A673 (cell line): ENCODE measurements at regions of chr5 and their contacts with region 1.

Region 1: GRCh38 chr5:87780831-87781760 is 368.4 kb upstream of the CCNH start:
- DNase-seq: peak; percentile 90
- H3K4me3 ChIP-seq: no peak overlapping the region
- H3K27ac ChIP-seq: no peak overlapping the region
- H3K4me1 ChIP-seq: no peaks in the 10 kb centered on the region
- H3K27me3 ChIP-seq: no peaks in the 10 kb centered on the region
- CTCF ChIP-seq: peak; percentile 90

Region 2: GRCh38 chr5:87421307-87421706 is 359.8 kb before region 1 on chr5:
- CTCF ChIA-PET with region 1: no interaction called
- POLR2A ChIA-PET with region 1: no interaction called
- intact Hi-C with region 1: loop called (anchors 2 kb)
- DNase-seq: no peak
- H3K4me3 ChIP-seq: no peak overlapping the region
- H3K27ac ChIP-seq: no peak overlapping the region
- H3K4me1 ChIP-seq: no peaks in the 10 kb centered on the region
- H3K27me3 ChIP-seq: no peaks in the 10 kb centered on the region
- CTCF ChIP-seq: no peak

Region 3: DNA sequence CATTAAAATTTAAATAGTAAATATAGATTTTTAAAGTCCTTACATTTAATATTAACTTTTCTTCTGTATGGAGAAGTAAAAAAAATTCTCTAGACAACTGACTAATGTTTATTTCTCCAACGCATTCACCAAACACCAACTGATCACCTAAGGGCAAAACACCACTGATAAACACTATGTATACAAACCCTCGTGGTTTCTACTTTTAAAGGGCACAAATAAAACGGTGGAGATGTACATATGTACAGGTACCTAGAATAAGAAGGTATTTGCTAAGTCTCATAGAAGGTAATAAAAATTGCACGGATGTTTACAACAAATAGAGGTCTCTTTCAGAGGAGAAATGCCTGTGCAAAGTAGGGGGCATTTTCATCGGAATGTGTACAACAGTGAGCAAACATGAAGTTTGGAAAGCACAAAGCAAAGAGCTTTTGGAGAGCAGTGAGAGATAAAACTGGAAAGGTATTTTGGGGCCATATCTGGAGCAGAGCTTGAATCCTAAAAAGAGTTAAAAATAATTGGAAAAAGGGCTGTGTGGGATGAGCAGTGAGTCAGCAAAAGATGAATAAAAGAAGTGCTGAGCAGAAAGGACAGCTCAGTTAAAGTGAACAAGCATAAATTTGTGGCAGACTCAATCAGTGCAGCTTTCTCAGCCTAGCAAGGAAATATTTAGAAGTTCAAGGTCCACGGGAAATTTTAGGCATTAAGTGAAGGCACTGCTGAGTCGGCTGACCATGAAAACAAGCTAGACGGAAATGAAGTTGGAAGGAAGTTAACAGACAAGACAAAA is 327.6 kb after region 1 on chr5:
- CTCF ChIA-PET with region 1: no interaction called
- POLR2A ChIA-PET with region 1: no interaction called
- intact Hi-C with region 1: no loop called
- DNase-seq: peak; percentile 0
- H3K4me3 ChIP-seq: no peak overlapping the region
- H3K27ac ChIP-seq: no peak overlapping the region
- H3K4me1 ChIP-seq: no peaks in the 10 kb centered on the region
- H3K27me3 ChIP-seq: no peaks in the 10 kb centered on the region
- CTCF ChIP-seq: no peak

Region 4: GRCh38 chr5:88140856-88141752 is 360.0 kb after region 1 on chr5:
- CTCF ChIA-PET with region 1: no interaction called
- POLR2A ChIA-PET with region 1: no interaction called
- intact Hi-C with region 1: loop called (anchors 1 kb)
- DNase-seq: peak; percentile 99
- H3K4me3 ChIP-seq: peak overlapping the region; percentile 56
- H3K27ac ChIP-seq: peak overlapping the region; percentile 49
- H3K4me1 ChIP-seq: no peaks in the 10 kb centered on the region
- H3K27me3 ChIP-seq: no peaks in the 10 kb centered on the region
- CTCF ChIP-seq: peak; percentile 67

Region 5: DNA sequence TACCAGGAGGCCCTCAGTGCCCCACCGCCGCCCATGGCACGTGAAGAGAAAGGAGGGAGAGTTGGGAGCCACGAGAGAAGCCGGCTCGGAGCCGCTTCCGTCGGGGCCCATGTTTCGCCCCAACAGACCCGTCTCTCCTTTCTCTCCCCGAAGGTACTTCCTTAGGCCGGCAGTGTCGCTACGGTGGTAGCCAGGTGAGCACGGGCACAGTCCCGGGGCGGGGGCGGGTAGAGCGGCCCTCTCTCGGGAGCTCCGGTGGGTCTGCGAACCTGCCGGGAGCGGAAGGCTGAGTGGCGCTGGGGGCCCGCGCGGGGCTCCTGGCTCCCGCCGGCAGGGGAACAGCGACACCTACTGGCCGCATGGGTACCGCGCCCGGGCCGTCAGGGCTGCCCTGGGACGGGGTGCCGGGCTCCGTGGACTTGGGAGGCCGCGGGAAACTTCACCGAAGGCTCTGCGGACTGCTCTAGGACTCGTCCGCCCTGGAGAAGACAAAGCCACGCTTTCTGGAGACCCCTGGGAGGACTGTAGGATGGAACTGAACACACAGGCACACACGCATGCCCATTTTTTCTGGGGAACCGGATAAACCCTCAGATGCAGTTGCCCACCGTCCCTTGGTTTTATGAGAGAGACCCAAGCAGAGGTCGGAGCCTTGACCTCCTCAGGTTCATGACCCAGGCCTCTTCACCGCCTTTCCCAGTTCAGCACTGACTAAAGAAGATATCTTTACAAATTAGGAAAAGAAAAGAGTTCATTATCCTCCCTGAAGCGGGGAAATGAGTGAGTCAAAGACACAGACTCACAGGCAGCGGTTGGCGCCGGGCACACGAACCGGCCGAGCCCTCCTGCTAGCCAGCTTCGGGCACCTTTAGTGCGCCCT is 899.4 kb after region 1 on chr5:
- CTCF ChIA-PET with region 1: interaction called, 4 read pairs
- POLR2A ChIA-PET with region 1: no interaction called
- intact Hi-C with region 1: loop called (anchors 2 kb)
- DNase-seq: peak; percentile 83
- H3K4me3 ChIP-seq: peak overlapping the region; percentile 41
- H3K27ac ChIP-seq: no peak overlapping the region
- H3K4me1 ChIP-seq: peaks cover 23% of the 10 kb centered on the region
- H3K27me3 ChIP-seq: peaks cover 37% of the 10 kb centered on the region
- CTCF ChIP-seq: peak; percentile 96

Region 6: DNA sequence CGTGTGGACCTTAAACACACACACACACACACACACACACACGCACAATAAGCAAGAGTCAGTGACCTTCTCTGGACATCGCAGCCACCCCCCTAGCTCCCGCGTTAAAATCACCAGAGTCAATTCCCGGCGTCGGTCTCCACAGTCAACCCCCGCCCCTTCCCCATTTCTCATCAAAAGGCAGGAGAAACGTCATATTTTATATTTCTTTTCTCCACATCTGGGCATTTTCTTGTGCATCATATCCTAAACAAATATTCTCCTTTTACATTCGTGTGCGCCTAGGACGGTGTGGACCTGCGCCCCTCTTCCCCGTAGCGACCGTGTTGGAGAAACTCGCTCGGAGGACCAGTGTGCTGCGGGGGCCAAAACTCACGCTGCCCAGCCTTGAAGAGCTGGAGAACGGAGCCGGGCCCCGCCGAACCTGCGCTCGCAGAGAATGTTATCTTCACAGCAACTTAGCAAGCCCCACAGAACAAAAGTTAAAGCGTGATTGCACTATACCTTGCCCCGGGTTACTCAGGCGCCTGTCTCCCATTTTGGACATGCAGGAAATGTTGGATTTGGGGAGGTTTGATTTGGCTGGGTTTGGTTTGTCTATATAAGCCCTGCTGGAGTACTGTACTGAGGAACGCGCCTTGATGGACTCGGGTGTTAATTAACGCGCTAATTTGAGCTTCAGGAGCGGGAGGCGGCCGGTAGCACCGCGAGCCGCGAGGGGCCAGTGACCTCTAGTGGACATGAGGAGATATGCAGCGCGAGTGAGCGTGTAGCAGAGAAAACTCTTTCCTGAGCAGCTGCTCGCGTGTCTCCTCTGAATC is 909.5 kb after region 1 on chr5:
- CTCF ChIA-PET with region 1: interaction called, 29 read pairs
- POLR2A ChIA-PET with region 1: no interaction called
- intact Hi-C with region 1: loop called (anchors 2 kb)
- DNase-seq: peak; percentile 75
- H3K4me3 ChIP-seq: peak overlapping the region; percentile 25
- H3K27ac ChIP-seq: no peak overlapping the region
- H3K4me1 ChIP-seq: peaks cover 3% of the 10 kb centered on the region
- H3K27me3 ChIP-seq: peaks cover 80% of the 10 kb centered on the region
- CTCF ChIP-seq: peak; percentile 97

Region 7: GRCh38 chr5:88724201-88724600 is 943.1 kb after region 1 on chr5:
- CTCF ChIA-PET with region 1: interaction called, 30 read pairs
- POLR2A ChIA-PET with region 1: no interaction called
- intact Hi-C with region 1: loop called (anchors 2 kb)
- DNase-seq: peak; percentile 53
- H3K4me3 ChIP-seq: no peak overlapping the region
- H3K27ac ChIP-seq: no peak overlapping the region
- H3K4me1 ChIP-seq: peaks cover 8% of the 10 kb centered on the region
- H3K27me3 ChIP-seq: no peaks in the 10 kb centered on the region
- CTCF ChIP-seq: peak; percentile 61